Activated T-helper 1 cell treated with anti-CD3 and anti-CD28 coated beads, Interleukin-12 subunit alpha, Interleukin-12 subunit beta, Interleukin-2, Interleukin-4 antibody, amounts not matched to agents 30 ng/mL and 10 ng/mL and 1 ng/mL, durations not matched to agents 14 hours and 24 hours and 36 hours (primary cell): ENCODE measurements at regions of chr4 and their contacts with region 1.

Region 1: GRCh38 chr4:64158648-64159326 is 250.5 kb downstream of the TECRL start:
- DNase-seq: peak; percentile 32
- H3K4me3 Mint-ChIP-seq: no peak overlapping the region
- H3K27ac Mint-ChIP-seq: no peak overlapping the region
- H3K4me1 Mint-ChIP-seq: no peaks in the 10 kb centered on the region
- H3K27me3 Mint-ChIP-seq: no peaks in the 10 kb centered on the region

Region 2: GRCh38 chr4:64477127-64477526 is 318.3 kb after region 1 on chr4:
- intact Hi-C with region 1: no loop called
- DNase-seq: no peak
- H3K4me3 Mint-ChIP-seq: no peak overlapping the region
- H3K27ac Mint-ChIP-seq: no peak overlapping the region
- H3K4me1 Mint-ChIP-seq: no peaks in the 10 kb centered on the region
- H3K27me3 Mint-ChIP-seq: no peaks in the 10 kb centered on the region

Region 3: DNA sequence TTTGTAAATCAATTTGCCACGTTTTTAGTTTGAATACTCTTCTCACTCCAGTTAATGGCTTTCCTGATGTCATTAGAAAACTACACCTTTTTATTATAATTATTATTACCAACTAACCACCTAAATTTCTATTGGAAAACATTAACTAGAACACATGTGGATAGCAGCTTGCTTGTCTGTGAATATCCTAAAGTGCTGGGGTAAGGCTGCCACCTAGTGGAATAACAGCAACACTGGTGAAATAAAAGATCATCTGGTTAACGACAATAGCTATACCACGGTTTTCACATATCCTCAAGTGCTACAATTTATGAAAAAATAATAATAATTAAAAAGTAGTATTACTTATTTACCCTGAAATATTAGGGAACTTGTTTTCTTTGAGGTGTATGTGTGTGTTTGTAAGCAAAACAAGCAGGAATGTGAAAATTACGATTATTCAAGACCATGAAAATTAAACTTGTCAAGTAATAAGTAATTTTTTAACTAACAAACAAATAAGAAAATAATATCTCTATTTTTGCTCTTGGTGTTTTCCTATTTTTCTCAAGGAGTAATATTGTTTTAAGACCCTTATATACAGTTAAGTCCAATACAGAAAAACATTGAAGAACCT is 380.6 kb after region 1 on chr4:
- intact Hi-C with region 1: loop called (anchors 1 kb)
- DNase-seq: peak; percentile 4
- H3K4me3 Mint-ChIP-seq: no peak overlapping the region
- H3K27ac Mint-ChIP-seq: no peak overlapping the region
- H3K4me1 Mint-ChIP-seq: no peaks in the 10 kb centered on the region
- H3K27me3 Mint-ChIP-seq: peaks cover 2% of the 10 kb centered on the region

Region 4: DNA sequence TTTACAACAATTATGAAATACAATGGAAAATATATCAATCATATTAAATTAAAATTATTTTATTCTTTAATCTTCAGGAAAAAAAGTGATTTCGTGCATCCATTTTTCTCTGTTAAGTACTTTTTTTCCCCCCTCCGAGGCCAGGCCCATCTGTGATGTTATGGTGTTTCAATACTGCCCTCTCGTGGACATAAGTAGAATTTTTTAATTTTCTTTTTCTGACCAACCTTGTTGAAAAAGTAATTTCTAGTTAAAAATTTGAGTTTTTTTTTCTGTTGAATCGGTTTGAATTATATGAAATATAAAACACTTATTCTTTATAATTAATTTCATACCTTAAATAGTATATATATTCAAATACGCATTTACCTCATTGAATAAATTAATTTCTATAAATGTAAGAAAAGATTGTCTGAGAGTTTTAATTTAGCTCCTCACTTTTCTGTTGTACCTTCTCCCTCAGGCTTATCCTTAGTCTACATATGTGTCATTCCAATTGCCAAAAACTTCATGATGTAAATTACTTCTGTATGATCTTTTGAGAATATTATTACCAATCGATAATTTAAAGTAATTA is 426.3 kb after region 1 on chr4:
- intact Hi-C with region 1: loop called (anchors 1 kb)
- DNase-seq: no peak
- H3K4me3 Mint-ChIP-seq: no peak overlapping the region
- H3K27ac Mint-ChIP-seq: no peak overlapping the region
- H3K4me1 Mint-ChIP-seq: no peaks in the 10 kb centered on the region
- H3K27me3 Mint-ChIP-seq: peaks cover 2% of the 10 kb centered on the region